T-cell (primary cell): ENCODE measurements at regions of chr7 and their contacts with region 1.

Region 1: GRCh38 chr7:120981888-120982615 is 6.5 kb upstream of the CPED1 start:
- DNase-seq: no peak
- ATAC-seq: no peak
- H3K4me3 ChIP-seq: no peak overlapping the region
- H3K4me3 Mint-ChIP-seq: no peak overlapping the region
- H3K27ac ChIP-seq: no peak overlapping the region
- H3K27ac Mint-ChIP-seq: no peak overlapping the region
- H3K4me1 ChIP-seq: no peaks in the 10 kb centered on the region
- H3K4me1 Mint-ChIP-seq: peaks cover 3 to 6% (median 4%) of the 10 kb centered on the region in 3 donors
- H3K27me3 ChIP-seq: peaks cover 0 to 5% of the 10 kb centered on the region in 2 experiments
- H3K27me3 Mint-ChIP-seq: peaks cover 9 to 13% of the 10 kb centered on the region in 2 donors

Region 2: DNA sequence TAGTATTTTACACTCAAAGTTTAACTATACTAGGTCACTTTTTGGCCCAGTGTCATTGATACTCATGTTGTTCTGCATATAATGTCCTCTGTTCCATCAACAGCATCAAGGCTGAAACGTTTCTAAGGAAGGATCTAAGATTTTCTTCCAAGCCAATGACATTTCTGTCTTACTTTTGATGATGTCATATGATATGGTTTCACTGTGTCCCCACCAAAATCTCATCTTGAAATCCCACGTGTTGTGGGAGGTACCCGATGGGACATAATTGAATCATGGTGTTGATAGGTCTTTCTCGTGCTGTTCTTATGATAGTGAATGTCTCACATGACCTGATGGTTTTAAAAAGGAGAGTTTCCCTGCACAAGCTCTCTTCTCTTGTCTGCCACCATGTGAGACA is 87.8 kb before region 1 on chr7:
- CTCF ChIA-PET with region 1: interaction called in 1 of 2 experiments, 11 read pairs
- POLR2A ChIA-PET with region 1: no interaction called
- DNase-seq: no peak
- ATAC-seq: no peak
- H3K4me3 ChIP-seq: no peak overlapping the region
- H3K4me3 Mint-ChIP-seq: no peak overlapping the region
- H3K27ac ChIP-seq: no peak overlapping the region
- H3K27ac Mint-ChIP-seq: no peak overlapping the region
- H3K4me1 ChIP-seq: no peaks in the 10 kb centered on the region
- H3K4me1 Mint-ChIP-seq: no peaks in the 10 kb centered on the region
- H3K27me3 ChIP-seq: peaks cover 0 to 6% of the 10 kb centered on the region in 2 experiments
- H3K27me3 Mint-ChIP-seq: peaks cover 5 to 14% of the 10 kb centered on the region in 2 donors

Region 3: GRCh38 chr7:121810831-121811672 is 829.0 kb after region 1 on chr7:
- CTCF ChIA-PET with region 1: no interaction called
- POLR2A ChIA-PET with region 1: no interaction called
- DNase-seq: no peak
- ATAC-seq: no peak
- H3K4me3 ChIP-seq: no peak overlapping the region
- H3K4me3 Mint-ChIP-seq: no peak overlapping the region
- H3K27ac ChIP-seq: no peak overlapping the region
- H3K27ac Mint-ChIP-seq: no peak overlapping the region
- H3K4me1 ChIP-seq: no peaks in the 10 kb centered on the region
- H3K4me1 Mint-ChIP-seq: no peaks in the 10 kb centered on the region
- H3K27me3 ChIP-seq: no peaks in the 10 kb centered on the region
- H3K27me3 Mint-ChIP-seq: no peaks in the 10 kb centered on the region